ENCODE measurements at regions of chr12 and their contacts with region 1.

Region 1: DNA sequence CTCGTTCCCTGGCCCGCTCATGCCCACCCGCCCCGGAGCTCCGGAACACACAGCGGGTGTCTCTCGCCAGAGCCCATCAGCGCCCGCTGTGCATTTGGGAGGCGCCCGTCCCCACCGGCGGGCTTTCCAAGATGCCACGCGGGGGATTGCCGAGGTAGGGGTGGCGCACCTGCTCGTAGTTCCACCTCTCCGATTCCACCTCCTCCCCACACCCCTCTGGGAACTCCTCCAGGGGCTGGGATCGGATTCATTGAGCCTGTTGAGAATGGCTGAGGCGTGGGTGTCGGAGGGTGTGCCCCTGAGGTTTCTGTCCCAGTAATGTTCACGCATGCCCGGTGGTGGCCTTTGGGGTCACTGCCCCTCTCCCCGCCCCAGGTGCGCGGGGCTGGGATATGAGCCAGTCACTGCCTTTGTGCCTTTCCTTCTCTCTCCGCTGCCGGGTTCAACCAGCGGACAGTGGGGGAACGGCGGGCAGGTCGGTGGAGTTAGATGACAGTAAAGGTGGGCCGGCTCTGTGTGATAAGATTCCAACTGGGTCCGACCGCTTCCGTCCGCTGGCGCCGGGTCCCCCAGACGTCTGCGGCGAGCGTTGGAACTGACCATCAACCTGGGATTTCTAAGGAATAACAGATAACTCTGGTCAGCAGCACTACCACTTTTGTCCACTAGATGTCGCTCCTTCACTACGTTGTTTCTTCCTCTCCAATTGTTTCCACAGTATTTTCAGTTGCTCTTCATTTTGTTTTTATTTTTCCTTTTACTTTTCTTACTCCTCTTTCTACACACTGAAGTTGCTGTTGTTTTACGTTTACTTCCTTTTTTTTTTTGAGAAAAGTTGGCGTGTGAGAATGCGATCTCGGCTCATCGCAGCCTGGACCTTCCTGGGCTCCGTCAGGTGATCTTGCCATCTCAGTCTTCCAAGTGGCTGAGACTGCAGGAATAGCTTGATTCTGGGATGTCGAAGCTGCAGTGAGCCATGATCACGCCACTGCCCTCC is 178.1 kb upstream of the ALG10B start:
- DNase-seq: peak; percentile 64 to 90 (median 79)
- H3K4me3 ChIP-seq: peak overlapping the region; percentile 2 to 56 (median 43)
- H3K27ac ChIP-seq: peak overlapping the region; percentile 75 to 78
- H3K4me1 ChIP-seq: peaks cover 0 to 2% (median 0%) of the 10 kb centered on the region in 3 donors
- H3K27me3 ChIP-seq: no peaks in the 10 kb centered on the region
- CTCF ChIP-seq: peak; percentile 94

Region 2: GRCh38 chr12:38316391-38317129 is 178.0 kb after region 1 on chr12 and contains the start of gene ALG10B:
- intact Hi-C with region 1: loop called (anchors 10 kb)
- DNase-seq: peak; percentile 96 to 99 (median 97)
- H3K4me3 ChIP-seq: peak within 1 kb of the TSS; percentile 58 to 87 (median 85)
- H3K27ac ChIP-seq: peak within 1 kb of the TSS; percentile 47 to 49
- H3K4me1 ChIP-seq: peaks cover 0 to 9% (median 0%) of the 10 kb centered on the region in 3 donors
- H3K27me3 ChIP-seq: no peaks in the 10 kb centered on the region
- CTCF ChIP-seq: peak; percentile 65
- total RNA-seq, gene ALG10B: 9.3 TPM